ENCODE measurements at regions of chr12 and their contacts with region 1.

Region 1: DNA sequence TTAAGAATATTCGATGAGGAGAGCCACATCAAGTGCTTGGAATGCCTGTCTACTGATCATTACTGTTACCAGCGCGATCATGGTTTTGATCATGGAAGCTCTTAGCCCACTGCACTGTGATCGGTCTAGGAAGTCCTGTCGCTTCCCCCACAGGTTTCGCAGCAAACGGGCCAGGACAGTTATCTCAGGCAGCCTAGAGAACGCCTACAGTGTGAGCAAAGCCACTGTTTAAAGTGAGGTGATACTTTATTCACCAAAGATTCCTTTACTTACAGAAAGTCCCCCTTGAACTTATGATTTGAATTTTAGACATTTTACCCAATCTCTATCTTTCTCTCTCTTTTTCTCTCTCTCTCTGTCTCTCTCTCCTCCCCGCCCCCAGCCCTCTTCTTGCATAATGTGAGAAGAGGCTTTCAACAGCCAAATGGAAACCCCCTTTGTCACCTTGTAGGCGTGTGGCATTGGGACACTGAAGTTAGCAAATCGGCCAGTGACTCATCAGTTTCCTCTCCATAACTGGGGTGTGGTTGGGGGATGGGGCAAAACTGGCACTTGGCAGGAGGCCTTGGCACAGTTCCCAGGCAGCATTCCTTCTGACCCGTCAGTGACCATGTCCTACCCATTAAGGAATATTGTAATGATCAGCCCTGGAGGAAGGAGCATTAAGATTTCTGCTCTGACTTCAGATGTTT is 214.8 kb downstream of the CHST11 start:
- DNase-seq: peak; percentile 92
- H3K4me3 Mint-ChIP-seq: peak overlapping the region; percentile 57
- H3K27ac Mint-ChIP-seq: peak overlapping the region; percentile 89
- H3K4me1 Mint-ChIP-seq: peaks cover 59% of the 10 kb centered on the region
- H3K27me3 Mint-ChIP-seq: no peaks in the 10 kb centered on the region

Region 2: DNA sequence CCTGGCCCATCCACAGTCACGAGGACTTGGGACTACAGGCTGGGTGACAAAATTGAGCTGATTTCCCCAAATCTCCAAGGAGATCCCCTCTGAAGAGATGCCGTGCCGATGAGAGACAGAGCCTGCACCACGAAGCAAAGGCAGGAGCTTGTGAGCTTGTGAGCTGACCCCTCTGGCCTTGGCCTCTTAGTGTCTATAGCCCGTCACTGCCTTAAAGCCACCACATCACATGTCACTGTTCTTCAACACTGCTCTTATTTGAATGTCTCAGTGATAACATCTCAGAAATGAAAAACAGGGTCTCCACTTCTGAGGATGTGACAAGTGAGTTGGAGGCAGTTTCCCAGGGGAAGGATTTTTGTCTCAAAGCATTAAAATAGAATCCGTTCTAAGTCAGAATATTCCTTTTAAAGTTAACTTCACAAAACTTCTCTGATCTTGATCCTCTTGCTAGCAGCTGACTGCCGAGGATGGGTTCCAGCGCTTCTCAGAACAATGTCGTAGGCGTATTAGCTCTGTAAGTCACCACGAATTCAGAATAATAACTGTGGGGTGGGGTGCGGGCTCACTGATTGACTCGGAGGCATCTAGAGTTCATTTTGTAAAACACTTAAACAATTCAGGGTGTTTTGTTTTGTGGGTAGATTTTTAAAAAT is 177.3 kb before region 1 on chr12:
- intact Hi-C with region 1: loop called (anchors 5 kb)
- DNase-seq: peak; percentile 77
- H3K4me3 Mint-ChIP-seq: peak overlapping the region; percentile 81
- H3K27ac Mint-ChIP-seq: peak overlapping the region; percentile 81
- H3K4me1 Mint-ChIP-seq: peaks cover 74% of the 10 kb centered on the region
- H3K27me3 Mint-ChIP-seq: no peaks in the 10 kb centered on the region

Region 3: GRCh38 chr12:104604070-104604994 is 67.2 kb before region 1 on chr12:
- intact Hi-C with region 1: loop called (anchors 1 kb)
- DNase-seq: peak; percentile 85
- H3K4me3 Mint-ChIP-seq: peak overlapping the region; percentile 55
- H3K27ac Mint-ChIP-seq: peak overlapping the region; percentile 85
- H3K4me1 Mint-ChIP-seq: peaks cover 59% of the 10 kb centered on the region
- H3K27me3 Mint-ChIP-seq: no peaks in the 10 kb centered on the region

Region 4: DNA sequence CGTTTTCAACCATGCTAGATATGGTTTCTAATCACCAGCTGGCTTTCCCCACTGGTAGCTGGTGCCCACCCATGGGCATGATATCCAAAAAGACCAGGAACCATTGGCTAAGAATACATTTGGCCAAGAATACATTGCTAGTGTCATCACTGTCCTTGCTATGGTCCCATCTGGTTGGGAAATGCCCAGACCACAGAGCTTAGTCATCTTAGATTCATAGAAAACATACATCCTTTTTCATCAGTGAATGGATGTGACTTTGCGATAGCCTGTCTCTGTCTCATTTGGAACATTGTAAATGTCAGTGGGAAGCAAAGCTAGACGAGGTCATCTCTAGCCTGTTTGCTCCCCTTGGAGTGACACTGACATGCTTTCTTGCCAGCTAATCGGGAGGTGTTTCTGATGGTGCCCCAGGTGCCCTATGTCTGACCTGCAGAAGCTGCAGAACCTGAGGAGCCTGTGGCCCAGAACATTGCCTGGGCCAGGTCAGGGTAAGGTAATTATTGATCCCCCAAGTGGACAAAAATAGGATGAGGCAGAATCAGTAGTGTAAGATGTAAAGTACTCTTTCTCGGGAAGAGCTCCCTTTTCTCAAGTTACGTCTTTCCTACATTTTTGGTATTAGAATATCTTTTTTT is 91.7 kb after region 1 on chr12:
- intact Hi-C with region 1: loop called (anchors 1 kb)
- DNase-seq: peak; percentile 73
- H3K4me3 Mint-ChIP-seq: peak overlapping the region; percentile 66
- H3K27ac Mint-ChIP-seq: peak overlapping the region; percentile 77
- H3K4me1 Mint-ChIP-seq: peaks cover 43% of the 10 kb centered on the region
- H3K27me3 Mint-ChIP-seq: no peaks in the 10 kb centered on the region

Region 5: DNA sequence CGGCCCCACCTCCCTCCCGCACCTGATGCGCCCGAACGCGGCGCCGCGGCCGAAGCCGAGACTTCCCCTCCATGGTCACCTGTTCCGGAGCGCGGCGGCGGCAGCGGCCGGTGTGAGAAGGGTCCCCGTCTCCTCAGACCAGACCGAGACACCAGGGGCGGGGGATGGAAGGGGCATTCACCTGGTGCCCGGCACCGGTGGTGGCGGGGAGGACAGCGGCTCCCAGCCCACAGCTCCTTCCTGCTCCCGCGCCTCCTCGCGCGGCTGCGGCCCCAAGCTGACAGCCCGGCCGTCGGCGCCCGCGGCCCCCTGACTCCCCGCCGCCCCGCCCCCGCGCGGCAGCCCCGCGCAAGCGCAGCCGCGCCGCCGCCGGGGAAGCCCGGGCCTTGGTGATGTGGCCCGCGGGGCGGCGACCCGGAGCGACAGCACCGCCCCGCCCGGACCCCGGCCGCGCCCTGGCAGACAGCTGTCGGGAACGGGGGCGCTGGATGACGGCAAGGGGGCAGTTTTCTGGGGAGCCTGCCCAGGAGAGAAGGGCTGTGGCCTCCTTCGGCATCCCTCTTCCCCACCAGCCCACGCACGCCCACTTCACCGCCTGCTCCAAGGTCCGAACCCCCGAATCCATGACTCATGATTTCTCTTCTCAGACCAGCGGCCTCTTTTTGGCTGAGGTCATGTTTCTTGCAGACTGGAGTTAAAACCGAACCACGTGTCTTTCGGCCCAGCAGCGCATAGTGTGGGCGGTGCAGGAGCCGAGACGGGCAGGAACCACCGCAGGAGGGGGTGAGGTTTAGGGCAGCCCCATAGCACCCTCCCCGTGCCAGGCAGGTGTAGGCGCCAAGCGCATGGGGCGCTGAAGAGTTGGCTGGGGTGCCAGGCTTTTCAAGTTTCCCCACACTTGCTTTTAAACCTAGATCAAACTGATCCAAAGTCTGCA is 286.7 kb after region 1 on chr12 and contains the start of gene SLC41A2:
- intact Hi-C with region 1: loop called (anchors 5 kb)
- DNase-seq: peak; percentile 95
- H3K4me3 Mint-ChIP-seq: peak within 1 kb of the TSS; percentile 85
- H3K27ac Mint-ChIP-seq: peak within 1 kb of the TSS; percentile 92
- H3K4me1 Mint-ChIP-seq: peaks cover 29% of the 10 kb centered on the region
- H3K27me3 Mint-ChIP-seq: peaks cover 39% of the 10 kb centered on the region
- total RNA-seq, gene SLC41A2: 11.5 and 12.3 TPM in 2 replicates